ENCODE measurements at regions of chr3 and their contacts with region 1.

Region 1: GRCh38 chr3:141493184-141493583 is 6.4 kb downstream of the RASA2 start:
- DNase-seq: no peak
- H3K4me3 ChIP-seq: no peak overlapping the region
- H3K27ac ChIP-seq: no peak overlapping the region
- H3K4me1 ChIP-seq: peaks cover 27% of the 10 kb centered on the region
- H3K27me3 ChIP-seq: no peaks in the 10 kb centered on the region
- CTCF ChIP-seq: no peak
- POLR2A ChIP-seq: no peak

Region 2: DNA sequence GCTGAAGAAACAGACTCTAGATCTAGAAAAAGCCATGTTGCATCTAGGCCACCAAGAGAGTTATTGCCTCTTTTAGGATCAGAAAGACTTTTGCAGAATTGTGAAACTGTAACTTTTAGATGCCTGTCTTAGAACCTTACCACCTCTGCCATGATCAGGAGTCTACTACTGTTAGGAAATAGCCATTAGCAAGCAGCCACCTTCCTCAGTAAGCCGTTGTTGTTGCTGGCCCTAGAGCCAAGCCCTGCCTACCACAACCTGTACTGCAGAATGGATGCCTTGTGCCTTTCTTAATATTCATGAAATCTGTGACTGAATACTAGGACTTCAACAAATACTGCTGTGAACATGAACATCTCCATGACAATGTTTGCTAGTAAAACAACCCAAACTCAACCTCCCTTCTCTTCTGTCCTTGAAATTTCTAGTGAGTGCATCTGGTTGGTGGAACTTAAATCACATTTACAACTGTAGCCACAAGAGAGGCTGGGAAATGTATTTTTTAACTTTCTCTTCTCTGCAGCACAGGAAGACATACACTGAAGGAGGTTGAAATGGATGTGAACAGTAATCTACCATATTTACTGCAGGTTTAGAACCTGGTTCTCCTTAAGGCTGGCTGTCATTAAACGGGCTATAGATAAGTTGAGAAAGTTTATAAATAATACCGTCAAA is 14.3 kb after region 1 on chr3:
- CTCF ChIA-PET with region 1: interaction called, 3 read pairs
- POLR2A ChIA-PET with region 1: no interaction called
- dilution Hi-C with region 1: no loop called
- intact Hi-C with region 1: loop called (anchors 2 kb)
- DNase-seq: no peak
- H3K4me3 ChIP-seq: no peak overlapping the region
- H3K27ac ChIP-seq: no peak overlapping the region
- H3K4me1 ChIP-seq: no peaks in the 10 kb centered on the region
- H3K27me3 ChIP-seq: no peaks in the 10 kb centered on the region
- CTCF ChIP-seq: no peak
- POLR2A ChIP-seq: no peak

Region 3: GRCh38 chr3:141998669-141999290 is 505.6 kb after region 1 on chr3:
- CTCF ChIA-PET with region 1: no interaction called
- POLR2A ChIA-PET with region 1: no interaction called
- dilution Hi-C with region 1: no loop called
- intact Hi-C with region 1: no loop called
- DNase-seq: peak; percentile 19
- H3K4me3 ChIP-seq: no peak overlapping the region
- H3K27ac ChIP-seq: no peak overlapping the region
- H3K4me1 ChIP-seq: no peaks in the 10 kb centered on the region
- H3K27me3 ChIP-seq: no peaks in the 10 kb centered on the region
- CTCF ChIP-seq: peak in 1 of 2 donors; percentile 8
- POLR2A ChIP-seq: no peak

Region 4: GRCh38 chr3:143375698-143376097 is 1882.5 kb after region 1 on chr3:
- CTCF ChIA-PET with region 1: no interaction called
- POLR2A ChIA-PET with region 1: no interaction called
- dilution Hi-C with region 1: no loop called
- intact Hi-C with region 1: no loop called
- DNase-seq: no peak
- H3K4me3 ChIP-seq: no peak overlapping the region
- H3K27ac ChIP-seq: no peak overlapping the region
- H3K4me1 ChIP-seq: no peaks in the 10 kb centered on the region
- H3K27me3 ChIP-seq: no peaks in the 10 kb centered on the region
- CTCF ChIP-seq: no peak
- POLR2A ChIP-seq: no peak